Ascending aorta (tissue), 2 donors: ENCODE measurements at regions of chr17 and their contacts with region 1.

Region 1: DNA sequence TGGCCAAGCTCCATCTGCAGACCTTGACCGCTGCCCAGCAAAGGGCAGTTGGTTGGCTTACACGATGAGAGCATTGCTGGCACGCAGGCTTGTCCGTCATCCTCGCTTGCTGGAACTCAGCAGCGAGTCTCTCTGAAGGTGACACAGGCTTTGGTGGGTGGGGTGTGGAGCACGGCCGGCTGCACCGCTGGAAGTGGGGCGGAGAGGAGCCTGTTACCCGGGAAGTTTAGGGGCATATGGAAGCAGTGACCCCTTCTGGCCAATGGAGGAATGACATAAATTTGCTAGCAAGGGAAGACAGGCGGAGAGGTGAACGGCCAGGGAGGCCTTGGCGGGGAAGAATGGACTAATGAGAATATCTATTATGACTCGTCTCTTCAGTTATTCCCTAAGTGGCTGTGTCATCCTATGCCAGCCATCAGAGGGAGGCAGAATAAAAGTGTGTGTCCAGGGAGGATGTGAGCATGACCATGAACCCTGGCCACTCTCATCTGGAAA is 65.9 kb upstream of the SDK2 start:
- DNase-seq: peak in 1 of 2 donors; percentile 77
- H3K4me3 ChIP-seq: no peak overlapping the region
- H3K27ac ChIP-seq: no peak overlapping the region
- H3K4me1 ChIP-seq: peaks cover 0 to 2% of the 10 kb centered on the region in 2 donors
- H3K27me3 ChIP-seq: no peaks in the 10 kb centered on the region
- CTCF ChIP-seq: peak; percentile 72 to 82 (median 78)

Region 2: GRCh38 chr17:73429440-73430164 is 280.5 kb before region 1 on chr17:
- intact Hi-C with region 1: loop called (anchors 1 kb)
- DNase-seq: peak; percentile 26 to 87
- H3K4me3 ChIP-seq: no peak overlapping the region
- H3K27ac ChIP-seq: no peak overlapping the region
- H3K4me1 ChIP-seq: no peaks in the 10 kb centered on the region
- H3K27me3 ChIP-seq: no peaks in the 10 kb centered on the region
- CTCF ChIP-seq: peak; percentile 81 to 98 (median 95)

Region 3: GRCh38 chr17:73446617-73447016 is 263.5 kb before region 1 on chr17:
- intact Hi-C with region 1: no loop called
- DNase-seq: no peak
- H3K4me3 ChIP-seq: no peak overlapping the region
- H3K27ac ChIP-seq: no peak overlapping the region
- H3K4me1 ChIP-seq: no peaks in the 10 kb centered on the region
- H3K27me3 ChIP-seq: no peaks in the 10 kb centered on the region
- CTCF ChIP-seq: no peak